ENCODE measurements at regions of chr15 and their contacts with region 1.

Region 1: GRCh38 chr15:51536965-51537574 is 85.5 kb downstream of the DMXL2 start:
- DNase-seq: peak; percentile 3
- ATAC-seq: no peak
- H3K4me3 ChIP-seq: no peak overlapping the region
- H3K27ac ChIP-seq: no peak overlapping the region
- H3K4me1 ChIP-seq: no peaks in the 10 kb centered on the region
- H3K27me3 ChIP-seq: no peaks in the 10 kb centered on the region
- CTCF ChIP-seq: peak; percentile 47
- EP300 ChIP-seq: no peak
- POLR2A ChIP-seq: no peak
- RAD21 ChIP-seq: no peak

Region 2: DNA sequence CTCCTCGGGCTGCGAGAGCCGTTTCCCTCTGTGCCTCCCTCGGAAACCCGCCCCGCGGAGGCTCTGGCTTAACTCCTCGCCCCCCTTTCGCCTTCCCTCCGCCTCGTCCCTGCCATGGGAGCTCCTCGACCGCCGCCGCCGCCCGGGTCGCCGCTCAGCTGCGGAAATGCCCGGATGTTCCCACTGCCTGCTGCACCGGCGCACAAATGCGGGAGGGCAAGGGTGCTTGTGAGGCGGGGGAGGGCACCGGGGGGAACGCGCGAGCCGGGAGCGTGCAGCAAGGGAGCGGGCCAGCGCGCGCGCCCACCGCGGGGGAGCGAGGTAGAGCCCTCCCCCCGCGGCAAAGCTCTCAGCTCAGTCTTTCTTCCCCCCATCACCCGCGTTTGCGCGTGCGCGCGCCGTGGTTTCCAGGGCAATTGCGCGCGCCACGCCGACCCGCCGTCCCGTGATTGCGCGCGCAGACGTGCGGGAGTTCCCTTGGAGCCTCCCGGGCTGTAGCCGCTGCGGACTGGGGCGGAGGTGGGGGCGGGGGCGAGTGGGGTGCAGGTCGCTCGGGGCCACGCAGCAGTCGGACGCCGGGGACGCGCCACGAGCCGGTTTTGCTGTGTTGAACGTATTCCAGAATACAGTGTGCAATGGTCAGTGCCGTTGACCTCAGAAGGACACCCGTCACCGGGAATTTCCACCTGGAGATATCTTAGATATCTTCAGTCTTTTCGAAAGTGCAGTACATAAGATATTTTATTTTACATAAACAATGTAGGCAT is 85.7 kb after region 1 on chr15 and contains the start of gene DMXL2:
- CTCF ChIA-PET with region 1: no interaction called
- POLR2A ChIA-PET with region 1: no interaction called
- in situ Hi-C with region 1: no loop called
- intact Hi-C with region 1: loop called (anchors 1 kb)
- DNase-seq: peak; percentile 67
- ATAC-seq: peak; percentile 88
- H3K4me3 ChIP-seq: peak within 1 kb of the TSS; percentile 81 to 96 (median 90)
- H3K27ac ChIP-seq: peak within 1 kb of the TSS; percentile 68
- H3K4me1 ChIP-seq: peaks cover 30% of the 10 kb centered on the region
- H3K27me3 ChIP-seq: no peaks in the 10 kb centered on the region; a peak in 1 of 5 replicates
- CTCF ChIP-seq: no peak
- EP300 ChIP-seq: no peak
- POLR2A ChIP-seq: peak in 1 of 2 experiments; percentile 49; a peak in 2 of 4 replicates
- RAD21 ChIP-seq: 0 out of 2 replicates have a peak, but pooled peaks have one; percentile 10
- total RNA-seq, gene DMXL2: 14.4 and 15.3 TPM in 2 replicates

Region 3: DNA sequence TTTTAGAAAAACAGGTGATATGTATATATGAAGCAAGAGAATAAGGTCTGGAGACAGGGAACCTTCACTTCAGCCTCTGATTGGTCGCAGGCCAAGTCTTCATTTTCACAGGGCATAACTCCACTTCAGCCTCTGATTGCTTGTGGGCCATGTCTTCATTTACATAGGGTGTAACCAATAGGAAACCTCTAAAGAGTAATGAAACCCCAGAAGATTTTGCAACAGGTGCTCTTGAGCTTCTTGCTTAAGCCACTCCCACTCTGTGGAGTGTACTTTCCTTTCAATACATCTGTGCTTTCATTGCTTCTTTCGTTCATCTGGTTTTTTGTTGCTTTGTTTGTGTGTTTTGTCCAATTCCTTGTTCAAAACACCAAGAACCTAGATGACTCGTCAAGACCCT is 121.6 kb after region 1 on chr15:
- CTCF ChIA-PET with region 1: no interaction called
- POLR2A ChIA-PET with region 1: no interaction called
- in situ Hi-C with region 1: no loop called
- intact Hi-C with region 1: no loop called
- DNase-seq: no peak
- ATAC-seq: no peak
- H3K4me3 ChIP-seq: no peak overlapping the region
- H3K27ac ChIP-seq: no peak overlapping the region
- H3K4me1 ChIP-seq: no peaks in the 10 kb centered on the region
- H3K27me3 ChIP-seq: no peaks in the 10 kb centered on the region
- CTCF ChIP-seq: no peak
- EP300 ChIP-seq: no peak
- POLR2A ChIP-seq: no peak
- RAD21 ChIP-seq: no peak

Region 4: DNA sequence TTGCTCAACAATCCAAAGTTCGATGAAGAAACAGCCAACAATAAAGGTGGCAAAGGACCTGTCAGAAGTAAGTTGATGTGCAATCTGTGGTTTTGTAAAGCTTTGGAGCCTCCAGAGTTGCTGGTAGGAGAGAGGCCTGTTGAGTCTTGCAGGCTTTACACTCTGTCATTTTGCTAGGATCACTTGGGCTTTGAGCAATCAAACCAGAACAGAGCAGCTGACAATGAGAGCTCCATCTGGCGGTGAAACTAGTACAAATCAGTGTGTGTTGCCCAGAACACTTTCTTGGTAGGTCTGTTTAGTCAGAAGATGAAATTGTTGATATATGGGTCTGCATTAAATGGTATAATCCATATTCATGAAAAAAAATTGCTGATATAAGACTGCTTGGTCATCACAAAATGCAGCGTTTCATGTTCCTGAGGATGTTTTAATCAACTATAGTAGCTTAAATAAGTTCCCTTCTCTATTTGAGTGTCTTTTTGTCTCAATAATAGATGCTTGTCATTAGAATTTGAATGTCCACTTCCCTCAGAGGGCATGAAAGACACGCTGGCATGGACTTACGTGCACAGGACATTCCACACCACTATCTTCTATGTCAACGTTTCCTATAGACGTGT is 240.0 kb after region 1 on chr15:
- CTCF ChIA-PET with region 1: no interaction called
- POLR2A ChIA-PET with region 1: no interaction called
- in situ Hi-C with region 1: no loop called
- intact Hi-C with region 1: loop called (anchors 10 kb)
- DNase-seq: peak; percentile 74
- ATAC-seq: peak; percentile 94
- H3K4me3 ChIP-seq: no peak overlapping the region
- H3K27ac ChIP-seq: no peak overlapping the region
- H3K4me1 ChIP-seq: peaks cover 6% of the 10 kb centered on the region; the same call in 1 of the 2 replicates
- H3K27me3 ChIP-seq: no peaks in the 10 kb centered on the region
- CTCF ChIP-seq: peak; percentile 83
- EP300 ChIP-seq: no peak
- POLR2A ChIP-seq: no peak
- RAD21 ChIP-seq: peak; percentile 51; the same call in 1 of the 2 replicates